GM10248 (cell line): ENCODE measurements at regions of chr9 and their contacts with region 1.

Region 1: GRCh38 chr9:18255158-18255629 is 218.8 kb upstream of the ADAMTSL1 start:
- DNase-seq: peak; percentile 60
- CTCF ChIP-seq: peak; percentile 82

Region 2: GRCh38 chr9:18238254-18238653 is 16.9 kb before region 1 on chr9:
- CTCF ChIA-PET with region 1: interaction called, 17 read pairs
- POLR2A ChIA-PET with region 1: interaction called, 5 read pairs
- DNase-seq: no peak
- CTCF ChIP-seq: no peak

Region 3: GRCh38 chr9:18396102-18396728 is 141.0 kb after region 1 on chr9:
- CTCF ChIA-PET with region 1: interaction called, 10 read pairs
- POLR2A ChIA-PET with region 1: no interaction called
- DNase-seq: no peak
- CTCF ChIP-seq: peak; percentile 8

Region 4: DNA sequence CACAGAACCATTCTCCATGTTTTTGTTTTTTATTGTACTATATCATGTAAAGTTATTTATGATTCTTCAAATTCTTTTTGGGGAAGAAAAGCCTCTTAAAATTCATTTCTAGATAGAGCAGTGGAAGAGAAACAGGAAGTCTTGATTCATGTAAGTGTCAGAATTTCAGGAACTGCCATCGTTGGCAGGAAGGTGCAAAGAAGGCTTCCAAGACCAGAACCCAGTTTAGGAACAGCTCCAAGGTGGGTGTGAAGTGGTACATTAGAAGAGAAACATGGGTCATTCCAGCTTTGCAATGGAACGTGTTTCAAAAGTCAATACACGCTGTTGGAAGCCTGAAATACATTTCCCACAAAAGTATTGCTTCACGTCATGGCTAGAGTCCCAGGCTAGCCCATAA is 763.0 kb after region 1 on chr9:
- CTCF ChIA-PET with region 1: interaction called, 11 read pairs
- POLR2A ChIA-PET with region 1: no interaction called
- DNase-seq: no peak
- CTCF ChIP-seq: no peak